Posterior vena cava (tissue), 2 donors: ENCODE measurements at regions of chr12 and their contacts with region 1.

Region 1: DNA sequence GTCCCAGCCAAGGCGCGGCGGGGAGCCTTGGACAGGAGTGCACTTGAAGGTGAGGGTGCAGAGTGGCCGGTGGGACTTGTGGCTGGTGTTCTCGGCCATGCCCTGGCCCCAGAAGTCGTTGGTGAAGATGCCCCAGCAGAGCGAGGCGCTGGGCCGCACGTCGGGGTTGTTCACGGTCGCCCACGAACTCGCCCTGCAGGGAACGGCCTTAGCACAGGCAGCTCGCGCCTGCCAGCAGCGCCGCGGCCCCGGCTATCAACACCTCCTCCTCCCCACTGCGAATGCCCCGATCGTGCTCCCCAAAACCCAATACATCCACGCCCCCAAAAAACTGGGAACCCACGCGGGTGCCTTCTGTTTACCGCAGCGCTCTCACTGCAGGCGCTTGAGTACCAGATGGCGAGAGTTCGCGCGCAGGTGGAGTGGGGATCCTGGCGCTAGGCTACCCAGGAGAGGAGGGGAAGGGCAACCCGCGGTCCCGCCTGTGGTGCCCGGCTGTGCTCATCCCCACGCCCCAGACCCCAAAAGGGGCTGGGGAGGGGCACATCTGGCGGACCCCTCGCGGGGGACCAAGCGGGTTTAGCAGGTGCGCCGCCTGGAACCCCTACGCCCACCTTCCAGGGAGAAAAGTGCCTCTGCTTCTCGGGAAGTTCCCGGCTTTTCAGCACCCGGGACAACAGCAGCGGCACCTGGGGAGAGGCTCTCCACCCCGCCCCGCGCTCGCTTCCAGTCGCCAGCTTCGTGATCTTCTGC is 386.3 kb upstream of the TMTC1 start:
- DNase-seq: no peak

Region 2: GRCh38 chr12:30120522-30120921 is 49.5 kb before region 1 on chr12:
- intact Hi-C with region 1: no loop called
- DNase-seq: no peak

Region 3: DNA sequence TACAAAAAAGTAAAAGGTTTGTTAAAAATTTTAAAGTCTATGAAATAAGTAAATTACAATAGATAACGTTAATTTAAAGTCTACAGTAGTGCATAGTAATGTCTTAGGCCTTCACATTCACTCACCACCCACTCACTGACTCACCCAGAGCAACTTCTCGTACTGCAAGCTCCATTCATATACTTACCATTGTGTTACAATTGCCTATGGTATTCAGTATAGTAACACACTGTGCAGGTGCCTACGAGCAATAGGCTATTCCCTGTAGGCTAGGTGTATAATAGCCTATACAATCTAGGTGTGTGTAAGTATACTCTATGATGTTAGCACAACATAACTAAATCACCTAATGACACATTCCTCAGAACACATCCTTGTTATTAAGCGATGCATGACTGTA is 49.0 kb after region 1 on chr12:
- intact Hi-C with region 1: loop called in 1 of 2 experiments (anchors 2 kb)
- DNase-seq: no peak

Region 4: GRCh38 chr12:31874961-31875608 is 1705.1 kb after region 1 on chr12:
- intact Hi-C with region 1: no loop called
- DNase-seq: peak; percentile 85